ENCODE measurements at regions of chr5 and their contacts with region 1.

Region 1: GRCh38 chr5:109409844-109410388 is at the start of gene PJA2:
- DNase-seq: peak; percentile 99
- H3K4me3 ChIP-seq: peak within 1 kb of the TSS; percentile 60 to 95 (median 95)
- H3K27ac ChIP-seq: peak within 1 kb of the TSS; percentile 97
- H3K4me1 ChIP-seq: peaks cover 21% of the 10 kb centered on the region
- H3K27me3 ChIP-seq: no peaks in the 10 kb centered on the region
- CTCF ChIP-seq: peak in 1 of 2 donors; percentile 36
- total RNA-seq, gene PJA2: 40.3 to 64.5 TPM

Region 2: DNA sequence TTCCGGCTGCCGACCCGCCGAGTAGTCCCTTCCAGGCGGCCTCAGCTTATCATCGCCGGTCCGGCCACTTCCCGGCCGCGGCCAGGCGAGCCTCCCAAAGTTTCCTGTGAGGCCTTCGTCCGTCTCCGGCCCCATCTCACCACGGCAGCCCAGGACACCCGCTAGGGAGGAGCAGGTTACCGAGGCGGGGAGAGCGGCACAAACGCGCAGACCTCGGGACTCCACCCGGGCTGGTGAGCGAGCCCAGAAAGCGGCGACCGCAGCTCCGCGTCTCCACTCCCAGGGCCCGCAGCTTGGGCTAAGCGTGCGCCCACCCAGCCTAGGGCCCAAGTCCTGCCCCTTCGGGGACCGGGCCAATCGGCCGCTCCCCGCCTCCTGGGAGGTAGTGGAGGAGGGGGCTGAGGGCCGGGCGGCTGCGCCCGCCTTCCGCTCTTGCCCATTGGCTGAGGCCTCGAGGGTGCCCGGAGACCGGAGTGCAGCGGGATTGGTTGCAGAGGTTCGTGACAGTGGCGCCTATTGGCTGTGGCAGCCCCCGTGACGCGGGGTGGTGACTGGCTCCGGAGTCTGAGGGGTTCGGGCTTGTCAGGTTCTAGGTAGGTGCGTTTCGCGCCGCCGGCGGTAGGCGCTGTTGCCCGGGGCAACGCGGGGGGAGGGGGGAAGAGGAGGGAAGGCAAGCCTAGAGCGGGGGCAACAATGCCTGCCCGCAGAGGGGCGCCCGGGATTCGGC is 661.4 kb before region 1 on chr5:
- CTCF ChIA-PET with region 1: no interaction called
- dilution Hi-C with region 1: no loop called
- in situ Hi-C with region 1: no loop called
- intact Hi-C with region 1: loop called (anchors 2 kb)
- DNase-seq: peak; percentile 100
- H3K4me3 ChIP-seq: peak overlapping the region; percentile 93 to 97 (median 97)
- H3K27ac ChIP-seq: peak overlapping the region; percentile 100
- H3K4me1 ChIP-seq: peaks cover 12% of the 10 kb centered on the region
- H3K27me3 ChIP-seq: no peaks in the 10 kb centered on the region
- CTCF ChIP-seq: peak in 1 of 2 donors; percentile 13

Region 3: DNA sequence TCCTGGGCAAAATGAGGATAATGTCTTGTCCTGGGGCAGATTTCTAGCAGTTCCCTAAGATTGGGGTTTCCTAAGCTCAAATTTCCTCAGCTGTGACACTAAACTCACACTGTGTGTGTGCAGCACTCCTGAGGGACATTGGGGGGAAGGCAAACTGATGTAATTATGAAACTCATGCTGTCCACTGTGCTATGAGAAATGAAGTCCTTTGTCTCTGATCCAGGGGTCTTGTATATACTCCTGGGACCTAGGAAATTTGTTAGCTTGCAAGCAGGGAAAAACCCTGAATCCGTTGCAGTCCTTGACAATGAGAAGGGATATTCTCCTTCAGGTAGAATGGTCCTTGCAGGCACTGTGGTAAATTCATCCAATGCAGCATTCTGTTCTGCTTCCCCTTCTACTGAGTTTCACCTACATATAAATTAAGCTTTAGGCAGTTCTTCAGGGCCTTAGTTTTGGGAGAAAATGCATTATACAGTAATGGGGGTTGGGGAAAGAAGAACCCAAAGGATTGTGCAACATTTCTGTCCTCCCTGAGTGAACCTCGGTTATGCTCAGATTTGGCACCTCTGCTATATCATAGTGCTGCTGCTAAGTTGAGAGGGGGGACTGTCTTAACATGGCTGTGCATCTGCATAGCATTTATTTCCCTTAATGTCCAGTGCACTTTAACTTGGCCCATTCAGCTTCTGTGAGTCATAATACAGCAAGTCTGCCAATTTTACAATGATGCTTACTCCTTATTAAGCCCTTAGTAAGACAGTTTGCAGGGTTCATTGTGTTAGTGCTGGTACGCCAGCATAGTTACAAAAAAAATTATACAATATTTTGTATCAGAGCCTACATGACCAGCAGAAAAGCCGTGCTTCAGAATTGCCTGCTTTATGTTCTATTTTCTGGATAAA is 80.3 kb before region 1 on chr5:
- CTCF ChIA-PET with region 1: no interaction called
- dilution Hi-C with region 1: no loop called
- in situ Hi-C with region 1: no loop called
- intact Hi-C with region 1: loop called (anchors 5 kb)
- DNase-seq: peak; percentile 26
- H3K4me3 ChIP-seq: no peak overlapping the region
- H3K27ac ChIP-seq: no peak overlapping the region
- H3K4me1 ChIP-seq: peaks cover 6% of the 10 kb centered on the region
- H3K27me3 ChIP-seq: no peaks in the 10 kb centered on the region
- CTCF ChIP-seq: no peak

Region 4: DNA sequence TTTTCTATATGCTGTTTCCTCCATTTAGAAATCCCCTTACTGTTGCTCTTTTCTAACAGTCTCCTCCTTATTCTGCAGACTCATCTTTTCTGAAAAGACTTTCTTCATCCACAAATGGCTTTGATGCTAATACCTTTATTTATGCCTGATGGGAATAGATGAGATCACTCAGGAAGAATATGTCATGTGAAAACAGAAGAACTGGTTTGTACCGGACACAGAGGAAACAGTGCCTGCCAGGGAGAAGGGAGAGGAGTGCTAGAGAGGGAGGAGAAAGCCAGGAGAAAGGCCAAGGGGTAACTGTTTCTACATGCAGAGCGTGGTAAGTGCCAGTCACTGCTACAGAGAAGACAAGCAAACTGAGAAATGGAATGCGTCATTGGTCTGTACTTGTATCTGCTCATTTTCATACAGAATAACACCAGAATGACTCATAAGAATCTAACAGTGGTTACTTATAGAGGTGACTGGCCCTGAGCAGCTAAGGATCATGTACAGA is 45.7 kb after region 1 on chr5:
- CTCF ChIA-PET with region 1: no interaction called
- dilution Hi-C with region 1: no loop called
- in situ Hi-C with region 1: no loop called
- intact Hi-C with region 1: loop called (anchors 1 kb)
- DNase-seq: peak; percentile 100
- H3K4me3 ChIP-seq: no peak overlapping the region
- H3K27ac ChIP-seq: peak overlapping the region; percentile 82
- H3K4me1 ChIP-seq: peaks cover 15% of the 10 kb centered on the region
- H3K27me3 ChIP-seq: no peaks in the 10 kb centered on the region
- CTCF ChIP-seq: no peak

Region 5: GRCh38 chr5:109688971-109689739 is 279.2 kb after region 1 on chr5:
- CTCF ChIA-PET with region 1: no interaction called
- dilution Hi-C with region 1: no loop called
- in situ Hi-C with region 1: no loop called
- intact Hi-C with region 1: loop called (anchors 10 kb)
- DNase-seq: peak; percentile 89
- H3K4me3 ChIP-seq: peak overlapping the region; percentile 66 to 90 (median 86)
- H3K27ac ChIP-seq: peak overlapping the region; percentile 78
- H3K4me1 ChIP-seq: peaks cover 15% of the 10 kb centered on the region
- H3K27me3 ChIP-seq: no peaks in the 10 kb centered on the region
- CTCF ChIP-seq: no peak